ENCODE measurements at regions of chr19 and their contacts with region 1.

Region 1: GRCh38 chr19:36120092-36120983 is 5.1 kb downstream of the TBCB start:
- DNase-seq: peak; percentile 92
- ATAC-seq: peak; percentile 82
- H3K4me3 ChIP-seq: peak overlapping the region; percentile 58 to 77 (median 64); a peak in 5 of 6 replicates
- H3K27ac ChIP-seq: peak overlapping the region; percentile 76
- H3K4me1 ChIP-seq: peaks cover 60% of the 10 kb centered on the region
- H3K27me3 ChIP-seq: no peaks in the 10 kb centered on the region
- CTCF ChIP-seq: peak; percentile 24
- EP300 ChIP-seq: peak; percentile 51 to 82; a peak in 3 of 4 replicates
- POLR2A ChIP-seq: peak in 1 of 2 experiments; percentile 78; a peak in 2 of 4 replicates
- RAD21 ChIP-seq: no peak

Region 2: DNA sequence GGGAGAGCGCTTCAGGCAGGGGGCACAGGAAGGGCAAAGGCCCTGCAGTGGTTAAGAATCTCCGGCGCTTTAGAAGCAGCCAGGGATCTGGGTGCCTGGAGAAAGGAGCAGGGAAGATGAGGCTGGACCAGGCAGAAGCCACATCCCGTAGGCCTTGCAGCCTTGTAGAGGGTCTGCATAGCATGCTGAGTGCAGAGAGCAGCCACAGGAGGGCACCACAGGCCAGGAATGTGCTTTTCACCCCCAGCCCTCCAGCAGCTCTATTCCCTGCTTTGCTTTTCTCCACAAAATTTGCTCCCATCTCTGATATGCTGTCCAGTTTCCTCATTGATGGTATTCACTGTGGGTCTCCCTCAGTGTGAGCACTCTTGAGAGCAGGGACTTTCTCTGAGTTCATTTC is 59.9 kb before region 1 on chr19:
- CTCF ChIA-PET with region 1: no interaction called
- POLR2A ChIA-PET with region 1: interaction called, 10 read pairs
- in situ Hi-C with region 1: no loop called
- intact Hi-C with region 1: loop called (anchors 2 kb)
- DNase-seq: no peak
- ATAC-seq: peak; percentile 73
- H3K4me3 ChIP-seq: no peak overlapping the region
- H3K27ac ChIP-seq: peak overlapping the region; percentile 88
- H3K4me1 ChIP-seq: peaks cover 56% of the 10 kb centered on the region
- H3K27me3 ChIP-seq: no peaks in the 10 kb centered on the region; a peak in 1 of 5 replicates
- CTCF ChIP-seq: peak; percentile 86
- EP300 ChIP-seq: no peak
- POLR2A ChIP-seq: no peak
- RAD21 ChIP-seq: peak; percentile 70

Region 3: DNA sequence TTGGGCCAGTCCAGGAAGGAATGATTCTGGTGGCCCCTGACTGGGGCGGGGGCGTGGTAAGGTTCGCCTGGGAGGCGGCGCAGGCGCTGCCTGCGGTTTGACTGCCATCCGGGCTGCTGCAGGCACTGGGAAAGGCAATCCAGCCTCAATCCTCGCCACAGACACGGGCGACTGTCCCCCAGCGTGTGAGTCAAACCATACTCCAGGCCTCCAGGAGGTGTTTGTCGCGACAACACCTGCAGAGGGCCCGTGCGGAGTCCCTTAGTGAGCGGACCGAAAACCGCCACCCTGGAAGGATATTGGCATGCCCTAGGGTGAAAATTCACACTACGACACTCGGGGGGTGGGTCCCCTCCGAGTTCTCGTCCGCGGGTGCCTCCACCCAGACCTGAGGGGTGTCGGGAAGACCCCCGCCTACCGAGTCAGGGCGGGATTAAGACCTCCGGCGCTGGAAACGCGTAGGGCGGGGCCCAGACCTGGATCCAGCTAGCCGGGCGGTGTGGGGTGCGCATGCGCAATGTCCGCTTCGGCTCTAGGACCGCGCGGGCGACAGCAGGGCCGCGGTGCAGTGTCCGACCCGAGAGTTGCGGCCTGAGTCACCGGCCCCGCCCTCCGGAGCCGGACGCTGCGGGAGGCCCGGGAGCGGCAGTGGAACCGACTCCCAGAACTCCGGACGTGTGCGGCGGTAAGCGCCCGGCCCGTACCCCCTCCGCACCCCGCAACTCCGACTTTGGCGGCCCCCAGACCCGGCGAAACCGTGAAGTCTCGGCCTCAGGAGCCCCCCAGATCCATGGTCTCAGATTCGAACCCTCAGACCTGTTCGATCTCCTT is 19.4 kb after region 1 on chr19 and contains the start of gene CAPNS1:
- CTCF ChIA-PET with region 1: no interaction called
- POLR2A ChIA-PET with region 1: interaction called, 14 read pairs
- in situ Hi-C with region 1: no loop called
- intact Hi-C with region 1: loop called (anchors 1 kb)
- DNase-seq: peak; percentile 88
- ATAC-seq: peak; percentile 88
- H3K4me3 ChIP-seq: peak within 1 kb of the TSS; percentile 79 to 100 (median 98)
- H3K27ac ChIP-seq: peak within 1 kb of the TSS; percentile 93
- H3K4me1 ChIP-seq: peaks cover 24% of the 10 kb centered on the region
- H3K27me3 ChIP-seq: no peaks in the 10 kb centered on the region; a peak in 1 of 5 replicates
- CTCF ChIP-seq: peak; percentile 21
- EP300 ChIP-seq: no peak
- POLR2A ChIP-seq: peak; percentile 60 to 86; a peak in 3 of 4 replicates
- RAD21 ChIP-seq: peak; percentile 43; the same call in 1 of the 2 replicates
- total RNA-seq, gene CAPNS1: 280 and 322 TPM in 2 replicates